ENCODE measurements at regions of chr14 and their contacts with region 1.

Region 1: DNA sequence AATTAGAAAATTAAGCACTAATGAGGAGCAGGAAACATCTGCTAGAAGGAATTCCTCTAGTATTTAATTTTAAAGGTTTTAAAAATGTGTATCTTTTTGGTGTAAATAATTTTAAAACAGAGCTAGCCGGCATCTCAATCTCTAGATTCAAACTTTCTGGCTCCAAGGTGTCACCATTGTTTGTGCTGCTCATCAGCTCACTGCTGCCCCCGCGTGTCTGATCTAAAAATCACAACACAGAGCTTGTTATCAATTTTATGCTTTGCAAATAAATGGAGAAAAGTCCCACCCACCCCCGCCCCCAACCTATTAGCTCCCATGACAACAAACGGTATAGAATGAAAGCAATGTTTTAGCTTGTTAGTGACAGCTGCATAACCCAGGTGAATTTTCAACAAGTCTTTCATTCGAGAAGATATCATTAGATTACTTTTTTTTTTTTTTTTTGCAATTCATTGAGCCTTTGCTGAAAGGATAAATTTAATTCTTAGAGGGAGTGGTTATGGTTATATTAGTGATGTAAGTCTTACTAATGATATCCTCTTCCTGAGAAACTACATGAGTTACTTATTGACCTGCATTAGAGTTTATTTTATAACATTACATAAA is 11.3 kb upstream of the ABHD12B start:
- DNase-seq: peak; percentile 82 to 89 (median 86)
- H3K4me3 ChIP-seq: peak overlapping the region; percentile 67 to 84
- H3K4me3 Mint-ChIP-seq: peak overlapping the region; percentile 88 to 95 (median 94)
- H3K27ac ChIP-seq: peak overlapping the region; percentile 40
- H3K27ac Mint-ChIP-seq: peak overlapping the region; percentile 78 to 93 (median 91)
- H3K4me1 ChIP-seq: peaks cover 13% of the 10 kb centered on the region
- H3K4me1 Mint-ChIP-seq: peaks cover 2 to 16% (median 9%) of the 10 kb centered on the region in 4 donors
- H3K27me3 ChIP-seq: no peaks in the 10 kb centered on the region
- H3K27me3 Mint-ChIP-seq: no peaks in the 10 kb centered on the region

Region 2: GRCh38 chr14:50542941-50543418 is 317.6 kb before region 1 on chr14:
- CTCF ChIA-PET with region 1: interaction called, 34 read pairs
- POLR2A ChIA-PET with region 1: interaction called, 4 read pairs
- intact Hi-C with region 1: loop called (anchors 1 kb)
- DNase-seq: peak; percentile 43 to 52 (median 49)
- H3K4me3 ChIP-seq: no peak overlapping the region
- H3K4me3 Mint-ChIP-seq: no peak overlapping the region
- H3K27ac ChIP-seq: no peak overlapping the region
- H3K27ac Mint-ChIP-seq: no peak overlapping the region
- H3K4me1 ChIP-seq: peaks cover 7% of the 10 kb centered on the region
- H3K4me1 Mint-ChIP-seq: peaks cover 9 to 15% (median 12%) of the 10 kb centered on the region in 4 donors
- H3K27me3 ChIP-seq: no peaks in the 10 kb centered on the region
- H3K27me3 Mint-ChIP-seq: peaks cover 2 to 8% of the 10 kb centered on the region in 2 donors

Region 3: DNA sequence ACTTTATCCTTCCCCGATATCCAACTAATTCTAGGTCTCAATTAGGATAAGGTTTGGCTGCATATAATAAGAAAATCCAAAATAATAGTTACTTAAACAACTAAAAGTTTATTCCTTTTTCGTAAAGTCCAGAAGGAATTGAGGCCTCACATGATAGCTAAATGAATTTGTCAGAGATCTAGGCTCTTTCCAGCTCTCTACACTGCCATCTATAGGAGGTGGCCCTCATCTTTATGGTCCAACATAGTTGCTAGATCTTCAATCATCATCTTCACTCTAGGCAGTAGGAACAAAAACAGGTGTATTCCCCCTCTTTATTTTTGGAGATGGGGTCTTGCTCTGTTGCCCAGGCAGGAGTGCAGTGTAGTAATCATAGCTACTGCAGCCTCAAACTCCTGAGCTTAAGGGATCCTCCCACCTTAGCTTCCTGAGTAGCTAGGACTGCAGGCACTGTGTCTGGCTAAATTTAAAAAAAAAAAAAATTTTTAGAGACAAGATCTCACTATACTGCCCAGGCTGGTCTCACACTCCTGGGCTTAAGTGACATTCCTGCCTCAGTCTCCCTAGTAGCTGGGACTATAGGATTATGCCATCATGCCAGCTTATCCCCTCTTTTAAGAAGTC is 146.0 kb before region 1 on chr14:
- CTCF ChIA-PET with region 1: interaction called, 12 read pairs
- POLR2A ChIA-PET with region 1: no interaction called
- intact Hi-C with region 1: no loop called
- DNase-seq: peak in 3 of 5 donors; percentile 4 to 14 (median 12)
- H3K4me3 ChIP-seq: no peak overlapping the region
- H3K4me3 Mint-ChIP-seq: no peak overlapping the region
- H3K27ac ChIP-seq: no peak overlapping the region
- H3K27ac Mint-ChIP-seq: no peak overlapping the region
- H3K4me1 ChIP-seq: no peaks in the 10 kb centered on the region
- H3K4me1 Mint-ChIP-seq: peaks cover 0 to 2% (median 0%) of the 10 kb centered on the region in 4 donors
- H3K27me3 ChIP-seq: no peaks in the 10 kb centered on the region
- H3K27me3 Mint-ChIP-seq: peaks cover 0 to 1% of the 10 kb centered on the region in 2 donors

Region 4: DNA sequence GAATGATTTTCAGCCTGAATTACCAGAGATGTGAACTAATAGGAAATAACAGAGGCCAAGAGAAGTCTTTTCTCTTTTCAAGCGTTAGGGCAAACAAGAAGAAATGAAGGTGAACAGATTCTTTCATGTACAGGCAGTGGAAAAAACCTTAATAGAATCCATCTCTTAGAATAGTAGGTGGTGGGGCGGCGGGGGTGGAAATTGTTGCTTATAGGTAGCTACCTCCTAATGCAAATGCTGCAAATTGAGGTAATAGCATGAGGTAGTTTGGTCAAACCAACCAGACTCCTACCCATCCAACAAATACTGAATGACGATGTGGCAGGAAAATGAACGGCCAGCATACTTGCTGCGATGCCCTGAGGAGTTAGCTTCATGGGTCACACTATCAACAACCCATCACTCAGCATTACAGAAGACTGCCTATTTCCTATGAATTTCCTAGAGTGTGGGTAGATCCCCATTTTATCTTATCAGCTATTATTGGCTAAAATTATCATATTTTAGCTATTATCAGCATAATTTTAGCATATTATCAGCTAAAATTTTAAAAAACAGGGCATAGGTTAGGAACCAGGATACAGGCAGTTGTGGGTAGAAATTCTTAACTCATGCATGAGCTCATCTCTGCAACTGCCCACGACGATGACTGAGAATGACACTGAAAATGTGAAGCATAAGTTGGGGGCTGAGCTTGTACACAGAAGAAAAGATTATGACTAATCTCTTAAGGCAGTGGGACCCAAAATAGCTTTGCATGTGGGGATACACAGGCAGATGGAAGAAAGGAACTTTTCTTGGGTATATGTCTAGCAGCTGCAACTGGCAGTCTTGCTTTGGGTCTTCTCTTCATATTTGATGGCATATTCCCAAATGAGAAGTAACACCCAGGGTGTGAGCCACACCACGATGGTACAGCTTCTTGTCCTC is 98.3 kb before region 1 on chr14:
- CTCF ChIA-PET with region 1: interaction called, 56 read pairs
- POLR2A ChIA-PET with region 1: interaction called, 5 read pairs
- intact Hi-C with region 1: no loop called
- DNase-seq: no peak
- H3K4me3 ChIP-seq: no peak overlapping the region
- H3K4me3 Mint-ChIP-seq: no peak overlapping the region
- H3K27ac ChIP-seq: no peak overlapping the region
- H3K27ac Mint-ChIP-seq: peak overlapping the region in 1 of 7 donors; percentile 69
- H3K4me1 ChIP-seq: no peaks in the 10 kb centered on the region
- H3K4me1 Mint-ChIP-seq: peaks cover 0 to 4% (median 2%) of the 10 kb centered on the region in 4 donors
- H3K27me3 ChIP-seq: no peaks in the 10 kb centered on the region
- H3K27me3 Mint-ChIP-seq: no peaks in the 10 kb centered on the region

Region 5: DNA sequence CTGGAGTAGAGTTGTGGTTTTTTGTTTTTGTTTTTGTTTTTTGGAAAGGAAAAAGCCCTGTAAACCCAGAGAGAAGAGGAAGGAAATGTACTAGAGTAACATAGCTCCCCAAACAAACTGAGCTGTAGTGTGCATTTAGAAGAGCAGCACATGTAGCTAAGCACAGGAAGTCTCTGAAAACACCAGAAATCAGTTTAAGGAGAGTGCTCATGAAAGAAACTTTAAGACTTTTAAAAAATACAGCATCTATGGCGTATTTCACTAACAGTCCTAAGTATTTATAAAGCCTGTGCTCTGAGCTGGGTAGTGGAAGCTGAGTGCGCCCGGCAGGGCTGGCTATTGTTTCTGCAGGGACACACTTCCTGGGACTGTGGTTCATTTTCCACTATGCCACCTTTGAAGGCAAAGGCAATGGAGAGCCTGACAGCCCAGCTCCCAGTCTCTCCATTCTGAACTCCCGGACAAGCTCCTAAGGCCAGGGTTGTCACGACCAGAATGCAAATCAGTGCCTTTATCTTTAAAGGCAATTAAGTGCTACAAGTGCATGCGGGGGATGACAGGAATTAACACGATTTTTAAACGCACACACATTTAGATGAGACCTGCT is 75.0 kb before region 1 on chr14:
- CTCF ChIA-PET with region 1: interaction called, 79 read pairs
- POLR2A ChIA-PET with region 1: interaction called, 31 read pairs
- intact Hi-C with region 1: no loop called
- DNase-seq: peak in 1 of 5 donors; percentile 22
- H3K4me3 ChIP-seq: no peak overlapping the region
- H3K4me3 Mint-ChIP-seq: peak overlapping the region; percentile 56 to 91 (median 74)
- H3K27ac ChIP-seq: peak overlapping the region; percentile 46
- H3K27ac Mint-ChIP-seq: peak overlapping the region; percentile 82 to 96 (median 88)
- H3K4me1 ChIP-seq: peaks cover 69% of the 10 kb centered on the region
- H3K4me1 Mint-ChIP-seq: peaks cover 52 to 89% (median 72%) of the 10 kb centered on the region in 4 donors
- H3K27me3 ChIP-seq: no peaks in the 10 kb centered on the region
- H3K27me3 Mint-ChIP-seq: no peaks in the 10 kb centered on the region

Region 6: DNA sequence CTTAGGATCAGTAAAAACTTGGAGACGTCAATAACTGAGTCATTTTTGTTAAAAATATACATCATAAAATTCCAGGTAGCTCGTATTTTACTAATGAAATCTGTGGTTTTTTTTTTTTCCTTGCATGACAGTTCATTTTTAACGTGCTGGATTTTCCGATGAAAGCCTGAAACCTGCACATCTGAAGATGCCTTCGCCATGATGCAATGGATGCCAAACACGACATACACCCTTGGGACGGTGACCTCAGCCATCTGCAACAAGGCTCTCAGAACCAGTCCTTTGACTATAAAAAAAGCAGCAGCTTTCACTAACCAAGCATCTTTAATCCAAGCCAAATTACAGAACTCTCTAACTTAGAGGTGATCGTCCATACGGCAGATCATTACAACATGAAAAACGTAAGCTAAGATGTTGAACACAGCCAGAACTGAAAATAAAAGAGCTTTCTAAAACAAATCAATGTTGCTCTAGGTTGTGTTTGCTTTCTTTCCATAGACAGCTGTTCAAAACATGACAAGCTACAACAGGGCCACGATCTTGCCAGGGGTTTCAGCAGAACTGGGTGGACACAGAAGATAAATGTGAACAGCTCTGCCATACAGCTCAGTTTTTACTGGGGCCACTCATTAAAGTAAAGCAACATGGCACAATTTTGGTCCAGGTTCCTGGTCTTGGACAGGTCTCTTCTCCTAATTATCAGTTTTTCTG is 37.4 kb before region 1 on chr14:
- CTCF ChIA-PET with region 1: interaction called, 55 read pairs
- POLR2A ChIA-PET with region 1: interaction called, 5 read pairs
- intact Hi-C with region 1: no loop called
- DNase-seq: no peak
- H3K4me3 ChIP-seq: no peak overlapping the region
- H3K4me3 Mint-ChIP-seq: peak overlapping the region; percentile 28 to 83 (median 60)
- H3K27ac ChIP-seq: peak overlapping the region; percentile 56
- H3K27ac Mint-ChIP-seq: peak overlapping the region; percentile 82 to 98 (median 94)
- H3K4me1 ChIP-seq: peaks cover 97% of the 10 kb centered on the region
- H3K4me1 Mint-ChIP-seq: peaks cover 75 to 92% (median 85%) of the 10 kb centered on the region in 4 donors
- H3K27me3 ChIP-seq: no peaks in the 10 kb centered on the region
- H3K27me3 Mint-ChIP-seq: no peaks in the 10 kb centered on the region

Region 7: GRCh38 chr14:50846226-50846880 is 14.2 kb before region 1 on chr14:
- CTCF ChIA-PET with region 1: interaction called, 27 read pairs
- POLR2A ChIA-PET with region 1: interaction called, 6 read pairs
- intact Hi-C with region 1: no loop called
- DNase-seq: no peak
- H3K4me3 ChIP-seq: no peak overlapping the region
- H3K4me3 Mint-ChIP-seq: no peak overlapping the region
- H3K27ac ChIP-seq: no peak overlapping the region
- H3K27ac Mint-ChIP-seq: no peak overlapping the region
- H3K4me1 ChIP-seq: no peaks in the 10 kb centered on the region
- H3K4me1 Mint-ChIP-seq: peaks cover 0 to 3% (median 0%) of the 10 kb centered on the region in 4 donors
- H3K27me3 ChIP-seq: no peaks in the 10 kb centered on the region
- H3K27me3 Mint-ChIP-seq: peaks cover 2 to 5% of the 10 kb centered on the region in 2 donors

Region 8: DNA sequence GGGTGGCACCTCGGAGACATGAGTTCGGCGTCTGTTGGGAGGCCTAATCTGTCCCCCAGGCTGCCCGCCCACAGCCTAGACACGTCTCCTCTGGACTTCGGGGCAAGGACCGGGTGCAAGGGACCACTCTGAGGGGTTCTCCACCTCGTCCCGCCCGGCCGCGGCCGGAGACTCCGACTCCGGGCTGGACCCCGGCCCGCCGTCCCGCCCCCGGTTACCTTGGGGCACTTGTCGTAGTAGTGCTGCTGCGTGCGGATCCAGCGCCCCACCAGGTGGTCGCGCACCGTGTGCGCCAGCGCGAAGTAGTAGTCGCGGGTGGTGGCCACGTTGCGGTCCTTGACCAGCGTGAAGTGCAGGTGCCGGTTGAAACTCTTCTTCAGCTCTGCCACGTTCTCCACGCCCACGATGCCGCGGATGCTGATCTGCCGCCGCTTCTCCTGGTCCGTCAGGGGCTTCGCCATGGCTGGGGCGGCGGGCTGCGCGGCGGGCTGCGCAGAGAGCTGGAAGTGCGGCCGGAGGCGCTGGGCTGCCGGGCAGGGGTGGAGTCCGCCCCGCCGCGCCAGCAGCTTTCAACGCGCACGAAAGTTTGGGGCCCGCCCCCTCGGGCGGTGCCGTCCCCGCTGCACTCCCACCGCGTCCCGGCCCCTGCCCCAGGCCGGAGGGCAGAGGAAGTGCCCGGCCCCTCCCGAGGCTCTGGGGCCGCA is 83.5 kb after region 1 on chr14 and contains the start of gene PYGL:
- CTCF ChIA-PET with region 1: no interaction called
- POLR2A ChIA-PET with region 1: no interaction called
- intact Hi-C with region 1: no loop called
- DNase-seq: peak in 3 of 5 donors; percentile 3 to 12 (median 7)
- H3K4me3 ChIP-seq: peak within 1 kb of the TSS in 1 of 2 donors; percentile 54
- H3K4me3 Mint-ChIP-seq: peak within 1 kb of the TSS; percentile 80 to 91 (median 86)
- H3K27ac ChIP-seq: no peak within 1 kb of the TSS
- H3K27ac Mint-ChIP-seq: peak within 1 kb of the TSS in 4 of 7 donors; percentile 17 to 74 (median 38)
- H3K4me1 ChIP-seq: peaks cover 9% of the 10 kb centered on the region
- H3K4me1 Mint-ChIP-seq: peaks cover 8 to 15% (median 9%) of the 10 kb centered on the region in 4 donors
- H3K27me3 ChIP-seq: peaks cover 16% of the 10 kb centered on the region
- H3K27me3 Mint-ChIP-seq: peaks cover 27 to 39% of the 10 kb centered on the region in 2 donors
- total RNA-seq, gene PYGL: 0.61 to 0.72 TPM